ENCODE measurements at regions of chr7 and their contacts with region 1.

Region 1: GRCh38 chr7:136009488-136010079 is 32.4 kb upstream of the MTPN start:
- DNase-seq: peak in 3 of 14 experiments; percentile 67 to 72 (median 67)
- ATAC-seq: no peak
- H3K4me3 ChIP-seq: no peak overlapping the region
- H3K4me3 Mint-ChIP-seq: no peak overlapping the region
- H3K27ac ChIP-seq: no peak overlapping the region
- H3K27ac Mint-ChIP-seq: no peak overlapping the region
- H3K4me1 ChIP-seq: no peaks in the 10 kb centered on the region
- H3K4me1 Mint-ChIP-seq: no peaks in the 10 kb centered on the region
- H3K27me3 ChIP-seq: no peaks in the 10 kb centered on the region
- H3K27me3 Mint-ChIP-seq: peaks cover 8% of the 10 kb centered on the region
- CTCF ChIP-seq: peak; percentile 89

Region 2: GRCh38 chr7:135274495-135275268 is 734.9 kb before region 1 on chr7:
- CTCF ChIA-PET with region 1: no interaction called
- POLR2A ChIA-PET with region 1: no interaction called
- intact Hi-C with region 1: loop called in 1 of 2 experiments (anchors 10 kb)
- DNase-seq: peak; percentile 51 to 80 (median 66)
- ATAC-seq: peak; percentile 82
- H3K4me3 ChIP-seq: no peak overlapping the region
- H3K4me3 Mint-ChIP-seq: no peak overlapping the region
- H3K27ac ChIP-seq: no peak overlapping the region
- H3K27ac Mint-ChIP-seq: no peak overlapping the region
- H3K4me1 ChIP-seq: no peaks in the 10 kb centered on the region
- H3K4me1 Mint-ChIP-seq: no peaks in the 10 kb centered on the region
- H3K27me3 ChIP-seq: peaks cover 0 to 3% of the 10 kb centered on the region in 2 experiments
- H3K27me3 Mint-ChIP-seq: peaks cover 3% of the 10 kb centered on the region
- CTCF ChIP-seq: peak; percentile 97

Region 3: GRCh38 chr7:135281363-135281949 is 728.1 kb before region 1 on chr7:
- CTCF ChIA-PET with region 1: no interaction called
- POLR2A ChIA-PET with region 1: no interaction called
- intact Hi-C with region 1: loop called (anchors 5 to 10 kb)
- DNase-seq: peak; percentile 53 to 90 (median 68)
- ATAC-seq: peak; percentile 98
- H3K4me3 ChIP-seq: no peak overlapping the region
- H3K4me3 Mint-ChIP-seq: no peak overlapping the region
- H3K27ac ChIP-seq: no peak overlapping the region
- H3K27ac Mint-ChIP-seq: no peak overlapping the region
- H3K4me1 ChIP-seq: peaks cover 16% of the 10 kb centered on the region
- H3K4me1 Mint-ChIP-seq: peaks cover 15% of the 10 kb centered on the region
- H3K27me3 ChIP-seq: peaks cover 0 to 3% of the 10 kb centered on the region in 2 experiments
- H3K27me3 Mint-ChIP-seq: peaks cover 11% of the 10 kb centered on the region
- CTCF ChIP-seq: peak; percentile 95

Region 4: GRCh38 chr7:135620980-135621850 is 388.4 kb before region 1 on chr7:
- CTCF ChIA-PET with region 1: no interaction called
- POLR2A ChIA-PET with region 1: no interaction called
- intact Hi-C with region 1: loop called in 1 of 2 experiments (anchors 1 kb)
- DNase-seq: peak in 5 of 14 experiments; percentile 1 to 65 (median 52)
- ATAC-seq: peak; percentile 51
- H3K4me3 ChIP-seq: no peak overlapping the region
- H3K4me3 Mint-ChIP-seq: no peak overlapping the region
- H3K27ac ChIP-seq: no peak overlapping the region
- H3K27ac Mint-ChIP-seq: no peak overlapping the region
- H3K4me1 ChIP-seq: no peaks in the 10 kb centered on the region
- H3K4me1 Mint-ChIP-seq: no peaks in the 10 kb centered on the region
- H3K27me3 ChIP-seq: no peaks in the 10 kb centered on the region
- H3K27me3 Mint-ChIP-seq: no peaks in the 10 kb centered on the region
- CTCF ChIP-seq: peak; percentile 98

Region 5: GRCh38 chr7:135672560-135673359 is 336.8 kb before region 1 on chr7:
- CTCF ChIA-PET with region 1: interaction called, 3 read pairs
- POLR2A ChIA-PET with region 1: no interaction called
- intact Hi-C with region 1: loop called (anchors 5 kb)
- DNase-seq: peak in 3 of 14 experiments; percentile 13 to 49 (median 45)
- ATAC-seq: peak; percentile 58
- H3K4me3 ChIP-seq: no peak overlapping the region
- H3K4me3 Mint-ChIP-seq: no peak overlapping the region
- H3K27ac ChIP-seq: no peak overlapping the region
- H3K27ac Mint-ChIP-seq: no peak overlapping the region
- H3K4me1 ChIP-seq: no peaks in the 10 kb centered on the region
- H3K4me1 Mint-ChIP-seq: peaks cover 42% of the 10 kb centered on the region
- H3K27me3 ChIP-seq: no peaks in the 10 kb centered on the region
- H3K27me3 Mint-ChIP-seq: no peaks in the 10 kb centered on the region
- CTCF ChIP-seq: peak; percentile 60

Region 6: DNA sequence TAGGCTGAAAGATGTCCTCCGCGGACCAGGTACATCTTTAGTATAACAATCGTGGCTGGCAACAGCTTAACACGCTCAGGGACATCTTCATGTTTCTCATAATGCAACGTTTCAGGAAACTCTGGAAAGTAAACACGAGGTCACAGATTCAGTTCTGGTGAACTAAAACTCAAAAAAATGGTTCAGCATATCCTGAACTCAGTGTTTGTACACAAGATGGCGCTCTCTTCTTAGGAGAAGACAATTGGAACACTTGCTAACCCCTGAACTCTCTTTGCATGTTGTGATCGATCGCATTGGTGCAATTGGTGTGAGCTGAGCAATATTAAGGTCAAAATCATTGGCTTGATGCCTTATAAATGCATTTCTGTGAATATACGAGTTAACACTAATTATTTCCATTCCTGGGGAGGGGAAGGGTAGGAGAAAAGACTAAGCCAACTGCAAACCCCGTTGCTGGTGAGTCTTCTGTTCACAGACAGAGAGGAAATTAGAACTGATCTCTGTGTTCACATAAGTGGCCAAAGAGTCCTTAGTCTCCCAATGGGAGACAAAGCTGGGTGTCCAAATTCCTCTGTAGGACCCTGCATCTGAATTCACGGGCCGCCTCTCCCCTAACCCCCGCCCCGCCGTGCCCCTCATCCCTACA is 208.4 kb before region 1 on chr7:
- CTCF ChIA-PET with region 1: interaction called, 17 read pairs
- POLR2A ChIA-PET with region 1: no interaction called
- intact Hi-C with region 1: loop called (anchors 1 kb)
- DNase-seq: peak in 6 of 14 experiments; percentile 9 to 77 (median 56)
- ATAC-seq: peak; percentile 54
- H3K4me3 ChIP-seq: no peak overlapping the region
- H3K4me3 Mint-ChIP-seq: no peak overlapping the region
- H3K27ac ChIP-seq: no peak overlapping the region
- H3K27ac Mint-ChIP-seq: no peak overlapping the region
- H3K4me1 ChIP-seq: peaks cover 8% of the 10 kb centered on the region
- H3K4me1 Mint-ChIP-seq: peaks cover 6% of the 10 kb centered on the region
- H3K27me3 ChIP-seq: peaks cover 0 to 3% of the 10 kb centered on the region in 2 experiments
- H3K27me3 Mint-ChIP-seq: peaks cover 13% of the 10 kb centered on the region
- CTCF ChIP-seq: peak; percentile 81

Region 7: GRCh38 chr7:135965602-135966001 is 44.0 kb before region 1 on chr7:
- CTCF ChIA-PET with region 1: no interaction called
- POLR2A ChIA-PET with region 1: no interaction called
- intact Hi-C with region 1: loop called in 1 of 2 experiments (anchors 5 kb)
- DNase-seq: no peak
- ATAC-seq: no peak
- H3K4me3 ChIP-seq: no peak overlapping the region
- H3K4me3 Mint-ChIP-seq: no peak overlapping the region
- H3K27ac ChIP-seq: no peak overlapping the region
- H3K27ac Mint-ChIP-seq: no peak overlapping the region
- H3K4me1 ChIP-seq: peaks cover 10% of the 10 kb centered on the region
- H3K4me1 Mint-ChIP-seq: peaks cover 92% of the 10 kb centered on the region
- H3K27me3 ChIP-seq: no peaks in the 10 kb centered on the region
- H3K27me3 Mint-ChIP-seq: no peaks in the 10 kb centered on the region
- CTCF ChIP-seq: no peak

Region 8: GRCh38 chr7:136104269-136104603 is 94.7 kb after region 1 on chr7:
- CTCF ChIA-PET with region 1: no interaction called
- POLR2A ChIA-PET with region 1: no interaction called
- intact Hi-C with region 1: no loop called
- DNase-seq: no peak
- ATAC-seq: no peak
- H3K4me3 ChIP-seq: no peak overlapping the region
- H3K4me3 Mint-ChIP-seq: no peak overlapping the region
- H3K27ac ChIP-seq: no peak overlapping the region
- H3K27ac Mint-ChIP-seq: no peak overlapping the region
- H3K4me1 ChIP-seq: no peaks in the 10 kb centered on the region
- H3K4me1 Mint-ChIP-seq: no peaks in the 10 kb centered on the region
- H3K27me3 ChIP-seq: no peaks in the 10 kb centered on the region
- H3K27me3 Mint-ChIP-seq: no peaks in the 10 kb centered on the region
- CTCF ChIP-seq: no peak